OCI-LY7 (cell line): ENCODE measurements at regions of chr18 and their contacts with region 1.

Region 1: DNA sequence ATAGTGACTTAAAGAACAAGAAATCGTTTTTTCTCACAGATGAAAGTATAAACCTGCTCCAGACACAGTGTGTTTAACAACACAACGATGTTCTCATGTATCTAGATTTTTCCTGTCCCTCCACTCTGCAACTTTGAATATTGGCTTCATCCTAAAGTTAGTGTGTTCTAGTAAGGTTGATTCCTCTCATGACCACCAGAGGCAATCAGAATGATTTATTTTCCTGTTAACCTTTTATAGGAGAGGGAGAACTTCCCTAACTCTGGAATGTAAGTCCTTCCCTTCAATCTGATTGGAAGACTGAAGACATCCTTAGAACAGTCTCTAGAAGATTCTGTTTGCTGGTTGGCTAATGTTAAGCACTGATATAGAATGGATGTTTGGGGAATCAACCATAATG is 41.0 kb upstream of the TAF4B start:
- DNase-seq: no peak
- H3K4me3 ChIP-seq: no peak overlapping the region
- H3K27ac ChIP-seq: no peak overlapping the region
- H3K4me1 ChIP-seq: peaks cover 60% of the 10 kb centered on the region
- CTCF ChIP-seq: peak; percentile 75

Region 2: GRCh38 chr18:26119246-26119645 is 66.0 kb before region 1 on chr18:
- CTCF ChIA-PET with region 1: no interaction called
- POLR2A ChIA-PET with region 1: interaction called, 10 read pairs
- intact Hi-C with region 1: no loop called
- DNase-seq: no peak
- H3K4me3 ChIP-seq: no peak overlapping the region
- H3K27ac ChIP-seq: no peak overlapping the region
- H3K4me1 ChIP-seq: no peaks in the 10 kb centered on the region
- CTCF ChIP-seq: no peak

Region 3: GRCh38 chr18:26159353-26159752 is 25.9 kb before region 1 on chr18:
- CTCF ChIA-PET with region 1: no interaction called
- POLR2A ChIA-PET with region 1: interaction called, 22 read pairs
- intact Hi-C with region 1: no loop called
- DNase-seq: peak; percentile 51
- H3K4me3 ChIP-seq: peak overlapping the region; percentile 32
- H3K27ac ChIP-seq: no peak overlapping the region
- H3K4me1 ChIP-seq: peaks cover 33% of the 10 kb centered on the region
- CTCF ChIP-seq: peak; percentile 81

Region 4: DNA sequence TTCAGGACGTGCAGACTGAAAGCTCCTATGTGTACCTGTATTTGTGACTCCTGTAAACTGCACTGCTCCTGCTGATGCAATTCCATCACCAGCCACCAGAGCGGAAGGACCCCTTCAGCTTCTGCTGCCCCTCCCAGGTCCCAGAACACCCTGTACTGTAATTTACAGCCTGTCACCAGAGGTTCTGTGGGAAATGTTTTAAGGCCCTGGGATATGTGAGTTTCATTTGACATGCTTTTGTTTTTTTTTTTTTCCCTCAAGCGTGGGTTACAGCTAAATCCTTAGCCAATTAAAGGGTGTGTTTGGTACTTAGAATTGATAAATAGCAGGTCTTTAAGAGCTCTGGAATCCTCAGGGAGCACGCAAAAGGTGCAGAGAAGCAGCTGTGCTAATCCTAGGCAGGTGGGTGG is 283.7 kb after region 1 on chr18:
- CTCF ChIA-PET with region 1: no interaction called
- POLR2A ChIA-PET with region 1: no interaction called
- intact Hi-C with region 1: loop called (anchors 10 kb)
- DNase-seq: peak; percentile 80
- H3K4me3 ChIP-seq: peak overlapping the region; percentile 41
- H3K27ac ChIP-seq: peak overlapping the region; percentile 65
- H3K4me1 ChIP-seq: peaks cover 34% of the 10 kb centered on the region
- CTCF ChIP-seq: peak; percentile 76

Region 5: DNA sequence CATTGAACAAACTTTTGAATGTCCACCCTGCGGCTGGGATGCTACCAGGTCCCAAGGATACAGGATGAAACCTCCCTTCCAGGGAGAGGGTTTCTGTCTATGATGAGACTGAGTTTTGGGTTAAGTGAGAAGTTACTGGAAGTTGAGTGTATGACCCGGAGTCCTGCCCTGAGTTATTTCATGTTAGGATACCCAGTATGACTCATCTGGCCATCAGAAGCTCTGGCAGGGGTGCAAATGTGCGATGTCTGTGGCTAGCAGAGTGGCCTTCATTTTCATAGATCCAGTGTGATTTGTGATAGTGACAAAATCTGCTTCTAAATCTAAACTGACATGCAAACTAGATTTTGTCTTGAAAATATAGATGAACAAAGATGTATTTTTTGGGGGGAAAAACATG is 307.8 kb after region 1 on chr18:
- CTCF ChIA-PET with region 1: no interaction called
- POLR2A ChIA-PET with region 1: no interaction called
- intact Hi-C with region 1: no loop called
- DNase-seq: no peak
- H3K4me3 ChIP-seq: no peak overlapping the region
- H3K27ac ChIP-seq: no peak overlapping the region
- H3K4me1 ChIP-seq: no peaks in the 10 kb centered on the region
- CTCF ChIP-seq: no peak